ENCODE measurements at regions of chr5 and their contacts with region 1.

Region 1: DNA sequence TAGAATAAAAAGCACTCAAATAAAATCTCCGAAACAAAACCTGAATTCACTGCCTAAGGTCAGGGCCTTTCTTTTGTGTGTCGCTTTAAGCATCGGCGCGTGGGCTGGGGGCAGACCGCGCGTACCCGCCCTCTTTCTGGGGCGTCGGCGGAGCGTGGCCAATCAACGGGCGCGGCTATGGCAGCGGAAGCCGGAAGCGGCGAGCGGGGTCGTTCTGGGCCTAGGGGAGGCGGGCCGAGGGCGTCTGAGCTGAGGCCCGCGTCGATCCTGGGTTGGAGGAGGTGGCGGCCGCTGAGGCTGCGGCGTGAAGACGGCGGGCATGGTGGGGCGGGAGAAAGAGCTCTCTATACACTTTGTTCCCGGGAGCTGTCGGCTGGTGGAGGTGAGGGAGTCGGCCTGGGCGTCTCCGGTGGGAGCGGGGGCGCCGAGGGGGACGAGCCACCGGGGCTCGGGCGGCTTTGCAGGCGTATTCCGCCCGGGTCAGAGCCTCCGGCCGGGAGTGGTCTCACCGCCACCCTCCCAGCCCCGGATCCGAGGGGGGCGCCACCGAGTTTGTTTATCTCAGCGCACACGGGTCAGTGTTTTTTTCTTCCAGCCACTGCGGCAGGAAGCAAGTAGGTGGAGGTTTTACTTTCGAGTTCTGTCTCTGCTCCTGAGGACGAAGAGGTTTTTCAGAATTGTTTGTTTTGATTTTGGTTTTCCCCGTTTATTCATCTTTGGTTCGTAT is at the start of gene MAT2B:
- DNase-seq: peak; percentile 93 to 97 (median 96)
- ATAC-seq: peak; percentile 88 to 89
- H3K4me3 Mint-ChIP-seq: peak within 1 kb of the TSS; percentile 90 to 98 (median 96)
- H3K27ac Mint-ChIP-seq: peak within 1 kb of the TSS; percentile 98 to 100 (median 99)
- H3K4me1 Mint-ChIP-seq: peaks cover 15 to 57% (median 49%) of the 10 kb centered on the region in 4 donors
- H3K27me3 Mint-ChIP-seq: no peaks in the 10 kb centered on the region
- polyA plus RNA-seq, gene MAT2B: 260 to 287 (median 260) TPM

Region 2: DNA sequence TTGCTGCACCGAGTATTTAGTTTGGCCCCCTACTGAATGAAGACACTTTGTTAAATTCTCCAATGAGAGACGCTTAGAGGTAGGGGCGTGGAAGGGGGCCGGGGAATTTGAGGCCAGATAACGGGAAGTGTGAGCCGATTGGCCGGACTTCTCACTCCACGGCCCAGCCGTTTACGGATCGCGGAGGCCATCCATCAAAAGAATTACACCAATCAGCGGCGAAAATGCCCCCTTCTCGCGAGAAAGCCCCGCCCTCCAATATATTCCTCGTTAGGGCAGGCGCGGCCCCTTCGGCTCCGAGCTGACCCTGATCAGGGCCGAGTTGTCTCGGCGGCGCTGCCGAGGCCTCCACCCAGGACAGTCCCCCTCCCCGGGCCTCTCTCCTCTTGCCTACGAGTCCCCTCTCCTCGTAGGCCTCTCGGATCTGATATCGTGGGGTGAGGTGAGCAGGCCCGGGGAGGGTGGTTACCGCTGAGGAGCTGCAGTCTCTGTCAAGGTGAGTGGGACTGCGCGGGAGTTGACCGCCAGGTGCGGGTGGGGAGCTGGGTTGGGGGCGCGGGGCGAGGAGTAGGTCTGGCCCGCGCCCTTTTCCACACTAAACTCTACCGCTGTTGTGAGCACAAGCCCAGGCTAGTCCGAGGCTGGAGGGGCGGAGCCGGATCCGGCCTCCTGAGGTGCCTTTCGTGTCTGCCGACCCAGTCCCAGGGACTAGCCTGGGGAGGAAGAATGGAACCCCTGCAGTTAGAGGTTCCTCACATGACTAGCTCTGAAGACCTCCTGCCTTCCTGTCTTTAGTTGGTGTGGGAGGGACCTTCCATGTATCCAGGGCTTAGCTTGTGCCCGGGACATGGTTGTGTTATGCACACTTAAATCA is 68.0 kb before region 1 on chr5 and contains the start of gene CCNG1:
- POLR2A ChIA-PET with region 1: interaction called, 29 read pairs
- DNase-seq: peak; percentile 67 to 94 (median 86)
- ATAC-seq: peak; percentile 95 to 96
- H3K4me3 Mint-ChIP-seq: peak within 1 kb of the TSS; percentile 87 to 97 (median 94)
- H3K27ac Mint-ChIP-seq: peak within 1 kb of the TSS; percentile 88 to 97 (median 94)
- H3K4me1 Mint-ChIP-seq: peaks cover 23 to 48% (median 43%) of the 10 kb centered on the region in 4 donors
- H3K27me3 Mint-ChIP-seq: peaks cover 0 to 9% (median 0%) of the 10 kb centered on the region in 5 donors
- polyA plus RNA-seq, gene CCNG1: 129 to 167 (median 135) TPM

Region 3: DNA sequence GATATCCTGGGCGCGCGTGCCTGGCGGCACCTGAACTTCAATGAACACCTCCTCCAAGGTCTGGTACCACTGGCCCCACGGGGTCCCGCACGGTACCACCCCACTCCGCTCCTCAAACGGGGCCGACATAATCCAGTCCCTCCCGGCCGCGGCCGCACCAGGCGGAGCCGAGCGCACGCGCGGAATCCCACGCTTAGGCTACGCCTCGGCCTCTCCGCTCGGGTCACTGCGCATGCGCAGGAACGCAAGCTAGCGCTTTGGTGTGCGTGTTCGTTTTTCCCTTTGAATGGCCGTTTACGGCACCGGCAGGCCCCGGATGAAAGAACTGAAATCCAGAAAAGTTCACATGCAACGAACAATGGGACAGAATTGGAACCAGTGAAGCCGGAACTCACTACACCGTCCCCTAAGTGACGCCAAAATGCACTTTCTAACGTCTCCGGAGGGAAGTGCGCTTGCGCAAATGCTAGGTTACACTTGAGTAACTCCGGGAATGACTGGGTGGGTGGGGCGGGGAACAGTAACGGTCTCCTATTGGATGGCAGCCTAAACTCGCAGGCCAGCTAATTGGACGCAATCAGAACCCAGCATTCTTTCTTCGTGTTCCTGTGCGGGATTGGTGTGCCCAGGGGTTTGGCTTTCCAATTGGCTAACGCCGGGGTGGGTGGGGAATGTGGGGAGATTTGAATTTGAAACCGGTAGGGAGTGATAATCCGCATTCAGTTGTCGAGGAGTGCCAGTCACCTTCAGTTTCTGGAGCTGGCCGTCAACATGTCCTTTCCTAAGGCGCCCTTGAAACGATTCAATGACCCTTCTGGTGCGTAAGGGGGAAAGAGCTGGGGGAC is 45.4 kb before region 1 on chr5 and contains the starts of genes HMMR and NUDCD2:
- POLR2A ChIA-PET with region 1: interaction called, 178 read pairs
- DNase-seq: peak; percentile 91 to 100 (median 95)
- ATAC-seq: peak; percentile 85 to 86
- H3K4me3 Mint-ChIP-seq: peak within 1 kb of the TSS; percentile 92 to 98 (median 98)
- H3K27ac Mint-ChIP-seq: peak within 1 kb of the TSS; percentile 99 to 100 (median 99)
- H3K4me1 Mint-ChIP-seq: peaks cover 13 to 52% (median 36%) of the 10 kb centered on the region in 4 donors
- H3K27me3 Mint-ChIP-seq: peaks cover 0 to 3% (median 0%) of the 10 kb centered on the region in 5 donors
- polyA plus RNA-seq, gene HMMR: 0.28 TPM in 1 of 3 donors, not detected in the others
- polyA plus RNA-seq, gene NUDCD2: 46.7 to 54.0 (median 53.2) TPM

Region 4: DNA sequence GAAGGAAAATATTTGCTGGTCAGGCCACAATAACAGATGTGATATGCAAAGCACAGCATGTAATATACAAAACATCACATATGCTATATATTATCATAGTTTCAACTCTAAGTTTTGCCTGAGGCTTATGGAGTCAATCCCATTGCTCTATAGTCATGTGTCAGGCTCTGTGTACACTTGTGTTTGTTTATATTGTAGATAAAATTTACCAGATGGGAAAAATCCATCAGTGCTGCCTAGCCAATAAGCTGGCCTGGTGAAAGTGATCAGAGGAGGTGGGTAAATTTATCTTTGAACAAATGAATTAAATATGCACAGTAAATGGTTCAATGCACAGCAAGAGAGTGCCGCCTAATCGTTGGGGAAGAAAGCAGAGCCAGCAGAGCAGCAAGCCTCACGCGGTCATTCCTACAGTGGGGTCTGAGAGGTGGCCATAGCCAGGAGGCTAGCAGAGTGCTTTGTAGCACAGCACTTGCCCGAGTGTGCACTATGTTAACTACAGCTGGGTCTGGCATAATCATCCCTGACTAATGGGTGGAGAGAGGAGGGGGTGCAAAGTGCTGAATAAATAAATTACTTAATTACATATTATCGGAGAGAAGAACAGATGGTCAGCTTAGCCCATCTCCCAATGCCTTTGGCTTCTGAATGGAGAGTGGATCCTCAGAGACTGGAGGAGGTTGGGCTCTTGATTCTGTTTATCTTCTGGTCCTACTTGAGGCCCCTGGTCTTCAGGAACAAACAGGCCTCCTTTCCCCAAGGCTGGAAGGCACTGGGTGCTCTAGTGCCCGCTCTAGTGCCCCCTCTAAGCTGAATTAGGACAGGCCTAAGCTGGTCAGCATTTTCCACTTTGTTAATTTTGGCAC is 153.4 kb after region 1 on chr5:
- POLR2A ChIA-PET with region 1: no interaction called
- DNase-seq: no peak
- ATAC-seq: no peak
- H3K4me3 Mint-ChIP-seq: no peak overlapping the region
- H3K27ac Mint-ChIP-seq: no peak overlapping the region
- H3K4me1 Mint-ChIP-seq: no peaks in the 10 kb centered on the region
- H3K27me3 Mint-ChIP-seq: peaks cover 0 to 17% (median 4%) of the 10 kb centered on the region in 5 donors

Region 5: DNA sequence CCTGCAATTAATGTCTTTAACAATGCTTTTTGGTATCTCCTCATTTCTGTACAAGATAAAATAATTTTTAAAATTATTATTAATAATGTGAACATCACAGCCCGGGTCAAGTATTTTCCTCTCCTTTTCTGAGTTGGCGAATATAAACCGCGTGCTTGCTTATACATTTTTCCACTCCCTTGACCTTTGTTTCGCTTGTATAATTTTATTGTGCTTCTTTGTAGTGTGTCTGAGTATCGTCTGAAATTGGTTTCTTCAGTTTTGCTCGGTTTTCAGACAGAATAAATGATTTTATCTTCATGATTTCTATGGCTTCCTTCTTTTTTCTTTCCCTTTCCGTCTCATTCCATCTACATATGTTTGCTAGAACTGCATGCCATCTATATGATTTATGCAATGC is 448.4 kb after region 1 on chr5:
- POLR2A ChIA-PET with region 1: no interaction called
- DNase-seq: no peak
- ATAC-seq: no peak
- H3K4me3 Mint-ChIP-seq: no peak overlapping the region
- H3K27ac Mint-ChIP-seq: no peak overlapping the region
- H3K4me1 Mint-ChIP-seq: no peaks in the 10 kb centered on the region
- H3K27me3 Mint-ChIP-seq: no peaks in the 10 kb centered on the region